Right cardiac atrium (tissue), 5 donors: ENCODE measurements at regions of chr3 and their contacts with region 1.

Region 1: GRCh38 chr3:58317811-58318210 is 11.5 kb downstream of the HTD2 start:
- DNase-seq: no peak
- ATAC-seq: no peak
- H3K4me3 ChIP-seq: no peak overlapping the region
- H3K27ac ChIP-seq: no peak overlapping the region
- H3K4me1 ChIP-seq: no peaks in the 10 kb centered on the region
- H3K27me3 ChIP-seq: no peaks in the 10 kb centered on the region

Region 2: DNA sequence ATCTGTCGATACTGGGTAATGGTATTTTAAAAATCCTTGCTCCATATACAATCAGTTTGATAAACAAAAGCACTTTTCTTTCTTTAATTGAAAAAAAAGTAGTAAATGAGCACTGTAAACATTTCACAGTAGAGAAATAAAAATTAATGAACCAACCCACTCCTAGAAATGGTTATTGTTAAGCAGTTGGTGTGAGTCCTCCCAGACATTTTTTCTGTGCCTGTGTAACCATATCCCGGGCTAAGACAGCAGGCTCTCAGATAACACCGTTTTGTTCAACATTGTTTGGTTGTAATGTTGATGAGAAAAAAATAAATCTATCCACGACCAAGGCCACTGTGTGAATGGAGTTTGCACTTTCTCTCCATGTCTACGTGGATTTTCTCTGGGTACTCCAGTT is 57.4 kb after region 1 on chr3:
- intact Hi-C with region 1: no loop called
- DNase-seq: no peak
- ATAC-seq: no peak
- H3K4me3 ChIP-seq: no peak overlapping the region
- H3K27ac ChIP-seq: no peak overlapping the region
- H3K4me1 ChIP-seq: no peaks in the 10 kb centered on the region
- H3K27me3 ChIP-seq: no peaks in the 10 kb centered on the region

Region 3: DNA sequence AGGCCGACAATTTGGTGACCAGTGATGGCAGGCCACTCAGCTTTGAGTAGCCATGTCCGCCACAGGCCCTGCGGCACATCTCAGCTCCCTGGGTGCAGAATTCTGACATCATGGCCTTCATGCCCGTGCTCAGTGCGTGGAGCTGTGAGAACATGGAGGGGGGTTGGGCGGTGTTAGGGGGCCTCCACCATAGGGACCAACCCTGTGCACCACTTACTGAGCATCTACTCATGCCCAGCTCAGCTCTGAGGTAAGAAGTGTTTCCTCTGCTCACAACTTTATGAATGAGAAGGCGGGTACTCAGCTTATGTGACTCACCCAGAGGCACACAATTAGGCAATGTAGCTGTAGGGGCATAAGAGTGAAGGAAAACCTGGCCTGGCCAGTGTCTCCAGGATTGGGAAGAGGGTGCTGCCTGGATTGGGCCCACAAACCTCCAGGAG is 208.7 kb after region 1 on chr3:
- intact Hi-C with region 1: loop called in 3 of 4 experiments (anchors 5 to 10 kb)
- DNase-seq: no peak
- ATAC-seq: peak in 1 of 2 donors; percentile 33
- H3K4me3 ChIP-seq: no peak overlapping the region
- H3K27ac ChIP-seq: no peak overlapping the region
- H3K4me1 ChIP-seq: no peaks in the 10 kb centered on the region
- H3K27me3 ChIP-seq: no peaks in the 10 kb centered on the region

Region 4: DNA sequence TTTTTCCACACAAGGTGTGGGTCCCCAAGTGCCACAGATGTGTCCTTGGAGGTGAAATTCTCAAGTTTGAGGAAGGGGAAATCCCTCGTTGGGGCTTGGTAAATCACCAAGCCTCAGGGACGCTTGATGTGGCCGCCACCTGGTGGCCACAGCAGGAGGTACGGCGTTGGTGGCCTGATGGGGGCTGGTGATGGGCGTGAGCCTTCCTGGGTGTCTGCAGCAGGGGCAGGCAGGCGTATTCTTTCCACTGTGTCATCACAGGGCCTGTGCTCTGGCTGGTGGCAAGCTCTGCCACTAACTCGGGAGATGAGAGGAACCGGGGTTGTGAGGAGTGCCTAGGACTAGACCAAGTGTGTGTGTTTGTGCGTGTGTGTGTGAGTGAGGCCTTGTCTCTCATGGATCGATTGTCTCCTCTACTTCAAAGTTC is 215.0 kb after region 1 on chr3:
- intact Hi-C with region 1: loop called in 3 of 4 experiments (anchors 5 to 10 kb)
- DNase-seq: peak; percentile 71 to 91 (median 88)
- ATAC-seq: peak; percentile 41 to 63
- H3K4me3 ChIP-seq: no peak overlapping the region
- H3K27ac ChIP-seq: no peak overlapping the region
- H3K4me1 ChIP-seq: peaks cover 13% of the 10 kb centered on the region
- H3K27me3 ChIP-seq: no peaks in the 10 kb centered on the region